Endothelial cell of umbilical vein (primary cell): ENCODE measurements at regions of chr2 and their contacts with region 1.

Region 1: GRCh38 chr2:48510329-48510728 is 19.6 kb upstream of the STON1 start:
- DNase-seq: peak; percentile 85
- H3K4me3 ChIP-seq: peak overlapping the region in 1 of 3 experiments; percentile 20
- H3K27ac ChIP-seq: peak overlapping the region; percentile 76
- H3K4me1 ChIP-seq: peaks cover 27% of the 10 kb centered on the region
- H3K27me3 ChIP-seq: no peaks in the 10 kb centered on the region
- CTCF ChIP-seq: no peak
- POLR2A ChIP-seq: no peak

Region 2: DNA sequence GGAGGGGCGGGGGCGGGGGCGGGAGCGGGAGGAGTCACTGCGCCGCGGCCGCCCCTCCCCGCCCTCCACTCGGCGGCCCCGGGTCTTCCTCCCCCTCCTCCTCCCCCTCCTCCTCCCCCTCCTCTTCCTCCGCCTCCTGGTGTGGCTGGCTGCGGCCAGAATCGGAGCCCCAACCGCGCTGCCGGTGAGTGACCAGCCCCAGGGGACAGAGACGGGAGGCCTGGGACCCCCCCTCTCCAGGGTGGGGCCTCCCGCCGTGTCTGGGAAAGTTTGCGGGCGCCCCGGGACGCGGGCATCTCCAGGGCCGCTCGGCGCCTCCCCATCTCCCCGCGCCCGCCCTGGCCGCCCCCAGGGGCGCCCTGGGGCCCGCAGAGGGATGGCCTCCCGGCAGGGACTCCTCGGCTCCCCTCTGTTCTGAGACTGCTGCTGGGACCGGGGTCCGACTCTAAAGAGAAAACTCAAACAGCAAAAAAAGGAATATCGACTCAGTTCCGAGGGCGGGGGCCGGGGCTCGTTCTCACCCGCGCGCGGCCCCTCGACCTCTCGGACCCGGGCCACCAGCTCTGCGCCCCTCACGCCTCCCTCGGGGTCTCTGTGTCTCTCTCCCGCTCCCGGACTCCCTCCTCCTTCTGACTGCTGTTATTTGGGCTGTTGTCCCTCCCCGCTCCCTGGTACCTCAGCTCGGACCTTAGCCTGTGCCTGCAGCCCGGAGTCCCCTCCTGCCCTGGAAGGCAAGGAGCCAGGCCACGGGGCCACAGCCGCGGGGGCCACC is 19.9 kb after region 1 on chr2 and contains the start of gene STON1:
- CTCF ChIA-PET with region 1: interaction called, 7 read pairs
- POLR2A ChIA-PET with region 1: no interaction called
- dilution Hi-C with region 1: no loop called
- intact Hi-C with region 1: loop called (anchors 2 kb)
- DNase-seq: peak; percentile 38
- H3K4me3 ChIP-seq: peak within 1 kb of the TSS; percentile 49 to 83 (median 81)
- H3K27ac ChIP-seq: peak within 1 kb of the TSS; percentile 40
- H3K4me1 ChIP-seq: peaks cover 25% of the 10 kb centered on the region
- H3K27me3 ChIP-seq: no peaks in the 10 kb centered on the region
- CTCF ChIP-seq: no peak
- POLR2A ChIP-seq: peak; percentile 20
- total RNA-seq, gene STON1: 12.0 and 12.1 TPM in 2 replicates

Region 3: DNA sequence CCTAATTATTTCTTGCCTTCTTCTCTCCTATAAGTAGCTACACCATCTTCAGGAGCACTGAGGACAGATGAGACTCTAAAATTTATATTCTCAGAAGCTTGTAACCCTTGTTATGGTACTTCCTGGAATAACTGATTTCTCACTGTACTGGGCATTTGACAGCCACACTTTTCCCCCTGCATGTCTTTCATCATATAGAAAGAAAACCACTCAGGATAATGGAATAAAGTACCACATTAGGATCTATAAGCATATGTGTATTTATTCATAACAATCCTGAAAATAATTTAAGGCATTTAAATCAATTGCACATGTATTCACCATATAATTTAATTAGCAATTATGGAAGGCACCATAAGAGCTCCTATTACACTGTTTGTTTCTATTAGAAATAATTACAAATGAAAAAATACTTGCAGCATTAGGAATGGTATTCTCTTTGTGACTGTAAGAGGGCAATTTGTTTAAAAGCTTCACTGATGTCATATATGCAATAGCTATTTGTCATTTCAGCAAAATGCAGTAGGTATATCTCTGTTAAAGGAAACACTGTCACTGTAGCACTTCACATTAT is 860.9 kb after region 1 on chr2:
- CTCF ChIA-PET with region 1: no interaction called
- POLR2A ChIA-PET with region 1: no interaction called
- dilution Hi-C with region 1: no loop called
- intact Hi-C with region 1: no loop called
- DNase-seq: no peak
- H3K4me3 ChIP-seq: no peak overlapping the region
- H3K27ac ChIP-seq: no peak overlapping the region
- H3K4me1 ChIP-seq: no peaks in the 10 kb centered on the region
- H3K27me3 ChIP-seq: no peaks in the 10 kb centered on the region
- CTCF ChIP-seq: no peak
- POLR2A ChIP-seq: no peak